Naive thymus-derived CD4-positive, alpha-beta T cell (primary cell): ENCODE measurements at regions of chr20 and their contacts with region 1.

Region 1: GRCh38 chr20:37282556-37282955 is 6.9 kb upstream of the MANBAL start:
- DNase-seq: no peak
- ATAC-seq: no peak
- H3K4me3 ChIP-seq: no peak overlapping the region
- H3K4me3 Mint-ChIP-seq: no peak overlapping the region
- H3K27ac ChIP-seq: no peak overlapping the region
- H3K27ac Mint-ChIP-seq: no peak overlapping the region
- H3K4me1 ChIP-seq: no peaks in the 10 kb centered on the region
- H3K4me1 Mint-ChIP-seq: peaks cover 0 to 1% (median 0%) of the 10 kb centered on the region in 7 donors
- H3K27me3 ChIP-seq: no peaks in the 10 kb centered on the region
- H3K27me3 Mint-ChIP-seq: peaks cover 0 to 12% (median 6%) of the 10 kb centered on the region in 5 donors

Region 2: GRCh38 chr20:37693635-37694626 is 411.4 kb after region 1 on chr20 and contains the start of gene CTNNBL1:
- CTCF ChIA-PET with region 1: no interaction called
- POLR2A ChIA-PET with region 1: no interaction called
- intact Hi-C with region 1: loop called in 1 of 2 experiments (anchors 10 kb)
- DNase-seq: peak; percentile 83 to 94 (median 93)
- ATAC-seq: peak; percentile 99
- H3K4me3 ChIP-seq: peak within 1 kb of the TSS; percentile 80
- H3K4me3 Mint-ChIP-seq: peak within 1 kb of the TSS; percentile 96 to 100 (median 99)
- H3K27ac ChIP-seq: peak within 1 kb of the TSS; percentile 76
- H3K27ac Mint-ChIP-seq: peak within 1 kb of the TSS; percentile 87 to 96 (median 93)
- H3K4me1 ChIP-seq: peaks cover 9 to 20% of the 10 kb centered on the region in 2 donors
- H3K4me1 Mint-ChIP-seq: peaks cover 19 to 53% (median 42%) of the 10 kb centered on the region in 7 donors
- H3K27me3 ChIP-seq: no peaks in the 10 kb centered on the region
- H3K27me3 Mint-ChIP-seq: peaks cover 12 to 22% (median 16%) of the 10 kb centered on the region in 5 donors
- total RNA-seq, gene CTNNBL1: 41.7 to 72.9 (median 49.1) TPM